Transverse colon (tissue), 4 donors: ENCODE measurements at regions of chr12 and their contacts with region 1.

Region 1: GRCh38 chr12:92987362-92987761 is 58.3 kb upstream of the EEA1 start:
- DNase-seq: no peak
- H3K4me3 ChIP-seq: no peak overlapping the region
- H3K27ac ChIP-seq: peak overlapping the region; percentile 43 to 68 (median 48)
- H3K4me1 ChIP-seq: peaks cover 8 to 19% (median 15%) of the 10 kb centered on the region in 4 donors
- H3K27me3 ChIP-seq: no peaks in the 10 kb centered on the region
- CTCF ChIP-seq: peak; percentile 54 to 79 (median 64)
- EP300 ChIP-seq: no peak
- POLR2A ChIP-seq: no peak

Region 2: DNA sequence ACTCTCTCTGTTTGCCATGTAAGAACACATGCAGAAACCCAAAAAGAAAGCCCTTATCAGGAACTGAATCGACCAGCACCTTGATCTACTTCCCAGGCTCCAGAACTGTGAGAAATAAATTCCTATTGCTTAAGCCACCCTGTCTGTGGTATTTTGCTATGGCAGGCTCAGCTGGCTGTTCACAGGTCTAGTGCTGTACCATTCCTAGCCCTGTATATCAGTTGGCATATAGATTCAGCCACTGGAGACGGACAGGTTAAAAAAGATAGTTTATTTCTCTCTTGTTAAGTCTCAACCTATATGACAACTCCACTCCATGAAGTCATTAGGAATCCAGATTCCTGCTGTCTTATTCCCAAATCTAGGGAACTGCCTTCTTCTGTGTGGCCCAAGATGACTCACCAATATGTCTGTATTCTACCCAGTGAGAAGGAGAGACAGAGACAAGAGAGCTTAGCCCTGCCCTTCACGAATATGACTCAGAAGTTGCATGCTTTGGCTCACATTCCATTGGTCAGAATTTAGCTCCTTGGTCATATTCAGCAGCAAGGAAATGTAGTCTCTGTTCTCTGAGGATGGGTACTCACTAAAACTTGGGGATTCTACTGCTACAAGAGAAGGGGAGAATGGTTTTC is 227.6 kb before region 1 on chr12:
- in situ Hi-C with region 1: no loop called
- intact Hi-C with region 1: no loop called
- DNase-seq: no peak
- H3K4me3 ChIP-seq: no peak overlapping the region
- H3K27ac ChIP-seq: no peak overlapping the region
- H3K4me1 ChIP-seq: no peaks in the 10 kb centered on the region
- H3K27me3 ChIP-seq: no peaks in the 10 kb centered on the region
- CTCF ChIP-seq: no peak
- EP300 ChIP-seq: no peak
- POLR2A ChIP-seq: no peak

Region 3: DNA sequence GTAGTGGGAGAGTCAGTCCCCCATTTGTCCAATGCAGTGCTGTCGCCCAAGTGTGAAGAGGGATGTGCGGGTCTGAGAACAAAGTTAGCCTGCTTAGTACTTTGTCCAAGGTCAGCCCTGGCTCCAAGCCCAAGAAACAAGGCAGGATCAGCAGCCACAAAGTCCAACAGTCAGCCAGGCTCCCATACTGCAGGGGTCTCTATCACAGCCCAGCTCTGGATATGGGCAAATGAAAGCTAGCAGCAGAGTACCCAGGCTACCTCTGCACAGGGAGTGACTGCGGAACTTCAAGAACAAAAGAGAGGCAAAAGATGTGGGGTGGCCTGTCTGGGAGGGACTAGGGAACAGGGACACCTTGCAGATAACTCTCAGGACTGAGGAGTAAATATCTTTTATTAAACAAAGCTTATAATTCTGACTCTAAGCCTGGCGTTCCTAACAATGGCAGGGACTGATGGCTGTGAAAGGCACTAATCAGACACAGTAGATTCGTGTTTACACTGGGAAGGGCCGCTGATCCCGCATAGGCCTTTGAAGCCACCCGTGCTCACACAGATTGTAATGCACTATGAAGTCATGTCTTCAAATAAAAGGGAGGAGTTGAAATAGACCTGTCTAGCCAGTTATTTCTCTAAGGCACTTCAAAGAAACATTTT is 32.7 kb after region 1 on chr12:
- in situ Hi-C with region 1: no loop called
- intact Hi-C with region 1: no loop called
- DNase-seq: peak; percentile 84
- H3K4me3 ChIP-seq: peak overlapping the region in 1 of 4 donors; percentile 17
- H3K27ac ChIP-seq: peak overlapping the region; percentile 78 to 86 (median 84)
- H3K4me1 ChIP-seq: peaks cover 0 to 53% (median 32%) of the 10 kb centered on the region in 4 donors
- H3K27me3 ChIP-seq: no peaks in the 10 kb centered on the region
- CTCF ChIP-seq: no peak
- EP300 ChIP-seq: no peak
- POLR2A ChIP-seq: no peak

Region 4: GRCh38 chr12:93380480-93381121 is 393.2 kb after region 1 on chr12:
- in situ Hi-C with region 1: loop called in 1 of 4 experiments (anchors 10 kb)
- intact Hi-C with region 1: no loop called
- DNase-seq: no peak
- H3K4me3 ChIP-seq: peak overlapping the region; percentile 9 to 98 (median 81)
- H3K27ac ChIP-seq: peak overlapping the region; percentile 98
- H3K4me1 ChIP-seq: peaks cover 18 to 65% (median 36%) of the 10 kb centered on the region in 4 donors
- H3K27me3 ChIP-seq: no peaks in the 10 kb centered on the region
- CTCF ChIP-seq: peak in 4 of 5 experiments; percentile 12 to 35 (median 20)
- EP300 ChIP-seq: no peak
- POLR2A ChIP-seq: no peak

Region 5: DNA sequence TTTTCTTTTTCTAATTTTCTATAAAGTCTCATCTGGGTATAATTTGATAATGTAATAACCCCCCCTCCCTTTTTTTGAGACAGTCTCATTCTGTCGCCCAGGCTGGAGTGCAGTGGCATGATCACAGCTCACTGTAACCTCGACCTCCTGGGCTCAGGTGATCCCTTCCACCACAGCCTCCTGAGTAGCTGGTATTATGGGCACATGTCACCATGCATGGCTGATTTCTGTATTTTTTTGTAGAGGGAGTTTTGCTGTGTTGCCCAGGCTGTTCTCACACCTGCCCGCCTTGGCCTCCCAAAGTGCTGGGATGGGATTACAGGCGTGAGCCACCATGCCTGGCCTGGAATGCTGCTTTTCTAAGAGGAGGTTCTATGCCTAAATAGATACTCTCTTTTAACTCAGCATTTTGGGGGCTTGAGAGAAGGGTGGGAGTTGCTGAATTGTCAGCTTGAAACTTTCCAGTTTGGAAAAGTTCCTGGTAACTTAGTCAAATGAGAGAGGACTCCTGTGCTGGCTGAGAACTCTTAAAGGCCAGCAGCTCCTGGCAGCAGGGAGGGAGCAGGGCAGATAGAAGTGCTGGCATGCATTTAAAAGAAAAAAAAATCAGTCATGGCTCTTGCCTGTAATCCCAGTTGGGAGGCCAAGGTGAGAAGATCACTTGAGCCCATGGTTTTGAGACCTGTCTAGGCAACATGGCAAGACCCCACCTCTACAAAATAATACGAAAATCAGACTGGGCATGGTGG is 403.4 kb after region 1 on chr12:
- in situ Hi-C with region 1: loop called in 2 of 4 experiments (anchors 10 kb)
- intact Hi-C with region 1: no loop called
- DNase-seq: no peak
- H3K4me3 ChIP-seq: no peak overlapping the region
- H3K27ac ChIP-seq: no peak overlapping the region
- H3K4me1 ChIP-seq: peaks cover 5 to 24% (median 17%) of the 10 kb centered on the region in 4 donors
- H3K27me3 ChIP-seq: no peaks in the 10 kb centered on the region
- CTCF ChIP-seq: no peak
- EP300 ChIP-seq: no peak
- POLR2A ChIP-seq: no peak